PC-3 (cell line): ENCODE measurements at regions of chr18 and their contacts with region 1.

Region 1: DNA sequence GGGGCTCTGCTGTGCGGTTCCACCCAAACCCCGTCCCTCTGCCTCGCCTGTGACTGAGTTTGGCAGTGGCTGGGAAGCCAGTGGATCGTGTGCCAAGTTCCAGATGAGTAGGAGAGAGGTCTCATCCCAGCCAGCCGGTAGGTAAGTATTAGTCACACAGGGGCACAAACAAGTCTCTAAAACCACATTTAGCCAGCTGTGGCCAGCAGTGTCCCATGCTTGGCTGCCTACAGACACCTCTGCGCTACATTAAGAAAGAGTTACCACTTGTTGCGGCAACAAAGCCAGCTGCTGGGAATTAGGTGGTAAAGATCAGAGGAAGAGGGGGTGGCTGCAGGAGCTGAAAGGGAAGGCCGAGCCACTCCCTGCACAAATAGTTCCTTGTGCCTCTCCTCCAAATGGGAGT is 81.2 kb downstream of the GATA6 start:
- DNase-seq: peak; percentile 92
- ATAC-seq: peak; percentile 100
- H3K4me3 ChIP-seq: no peak overlapping the region
- H3K27ac ChIP-seq: peak overlapping the region; percentile 49
- H3K4me1 ChIP-seq: peaks cover 16% of the 10 kb centered on the region
- H3K27me3 ChIP-seq: no peaks in the 10 kb centered on the region
- CTCF ChIP-seq: no peak; the same call in 1 of the 2 replicates

Region 2: GRCh38 chr18:22223254-22223960 is 27.2 kb before region 1 on chr18:
- CTCF ChIA-PET with region 1: no interaction called
- POLR2A ChIA-PET with region 1: no interaction called
- intact Hi-C with region 1: loop called (anchors 1 kb)
- DNase-seq: peak; percentile 98
- ATAC-seq: peak; percentile 100
- H3K4me3 ChIP-seq: peak overlapping the region; percentile 46
- H3K27ac ChIP-seq: peak overlapping the region; percentile 78
- H3K4me1 ChIP-seq: peaks cover 17% of the 10 kb centered on the region
- H3K27me3 ChIP-seq: no peaks in the 10 kb centered on the region
- CTCF ChIP-seq: no peak